PC-9 (cell line): ENCODE measurements at regions of chr1 and their contacts with region 1.

Region 1: GRCh38 chr1:225652729-225653462 is at the start of gene ENAH:
- DNase-seq: peak; percentile 48 to 90
- H3K4me3 ChIP-seq: peak within 1 kb of the TSS; percentile 92
- H3K27ac ChIP-seq: peak within 1 kb of the TSS; percentile 89
- H3K4me1 ChIP-seq: peaks cover 65% of the 10 kb centered on the region
- H3K27me3 ChIP-seq: no peaks in the 10 kb centered on the region
- CTCF ChIP-seq: no peak
- total RNA-seq, gene ENAH: 118 and 167 TPM in 2 replicates

Region 2: DNA sequence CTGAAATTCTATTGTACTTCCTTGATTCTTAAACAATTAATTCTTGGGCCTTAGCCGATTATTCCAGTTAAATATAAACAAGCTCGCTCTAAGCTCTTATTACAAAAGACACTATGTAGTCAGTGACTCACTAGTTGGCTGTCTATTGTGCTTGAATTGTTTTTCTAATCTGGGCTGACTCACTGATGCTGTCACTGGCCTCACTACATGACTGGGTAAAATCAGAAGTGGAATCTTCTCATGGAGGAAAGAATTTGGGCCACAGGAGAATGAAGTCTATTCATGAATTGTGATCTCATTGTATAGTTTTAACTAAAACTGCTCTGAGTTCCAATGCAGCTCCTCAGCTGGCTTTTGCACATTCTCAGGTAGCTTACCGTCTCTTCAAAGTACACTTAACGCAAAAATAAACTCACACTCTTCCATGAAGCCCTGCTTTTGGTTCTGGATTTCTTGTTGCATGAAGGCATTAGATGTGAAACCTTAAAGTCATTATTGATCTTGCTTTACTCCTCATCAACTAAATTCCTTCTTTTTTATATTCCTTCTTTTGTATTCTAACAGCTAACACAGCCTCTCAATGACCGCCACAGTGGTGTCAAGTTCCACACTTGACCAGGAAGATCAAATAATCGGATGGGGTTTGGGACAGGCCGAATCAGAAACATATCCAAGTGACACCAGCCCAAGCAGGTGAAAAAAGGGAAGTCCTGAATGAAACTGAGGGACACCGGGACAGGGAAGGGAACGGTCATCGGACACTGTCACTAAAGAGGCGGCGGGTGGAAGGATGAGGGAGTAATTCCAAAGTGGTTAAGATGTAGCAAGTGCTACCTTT is 144.1 kb before region 1 on chr1:
- CTCF ChIA-PET with region 1: no interaction called
- POLR2A ChIA-PET with region 1: interaction called, 4 read pairs
- intact Hi-C with region 1: loop called (anchors 2 kb)
- DNase-seq: peak; percentile 65 to 98
- H3K4me3 ChIP-seq: no peak overlapping the region
- H3K27ac ChIP-seq: peak overlapping the region; percentile 93
- H3K4me1 ChIP-seq: peaks cover 36% of the 10 kb centered on the region
- H3K27me3 ChIP-seq: no peaks in the 10 kb centered on the region
- CTCF ChIP-seq: no peak

Region 3: DNA sequence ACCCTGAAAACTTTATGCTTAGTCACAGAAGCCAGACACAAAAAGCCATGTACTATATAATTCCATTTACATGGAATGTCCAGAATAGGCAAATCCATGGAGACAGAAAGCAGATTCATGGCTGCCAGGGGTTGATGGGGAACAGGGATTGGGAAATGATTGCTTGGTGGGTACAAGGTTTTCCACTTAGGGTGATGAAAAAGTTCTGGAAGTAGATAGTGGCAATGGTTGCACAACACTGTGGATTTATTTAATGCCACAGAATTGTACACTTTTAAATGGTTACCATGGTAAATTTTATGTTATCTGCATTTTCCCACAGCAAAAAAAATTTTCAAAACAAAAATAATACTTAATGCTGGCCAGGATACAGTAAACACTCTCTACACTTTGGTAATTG is 40.6 kb before region 1 on chr1:
- CTCF ChIA-PET with region 1: no interaction called
- POLR2A ChIA-PET with region 1: interaction called, 12 read pairs
- intact Hi-C with region 1: loop called (anchors 5 kb)
- DNase-seq: peak in 1 of 2 experiments; percentile 10
- H3K4me3 ChIP-seq: no peak overlapping the region
- H3K27ac ChIP-seq: peak overlapping the region; percentile 43
- H3K4me1 ChIP-seq: peaks cover 15% of the 10 kb centered on the region
- H3K27me3 ChIP-seq: no peaks in the 10 kb centered on the region
- CTCF ChIP-seq: no peak

Region 4: GRCh38 chr1:225700164-225700740 is 47.4 kb after region 1 on chr1:
- CTCF ChIA-PET with region 1: interaction called, 3 read pairs
- POLR2A ChIA-PET with region 1: interaction called, 18 read pairs
- intact Hi-C with region 1: loop called (anchors 1 kb)
- DNase-seq: peak; percentile 75 to 99
- H3K4me3 ChIP-seq: peak overlapping the region; percentile 30; the same call in 1 of the 2 replicates
- H3K27ac ChIP-seq: peak overlapping the region; percentile 71
- H3K4me1 ChIP-seq: peaks cover 23% of the 10 kb centered on the region
- H3K27me3 ChIP-seq: no peaks in the 10 kb centered on the region
- CTCF ChIP-seq: no peak

Region 5: DNA sequence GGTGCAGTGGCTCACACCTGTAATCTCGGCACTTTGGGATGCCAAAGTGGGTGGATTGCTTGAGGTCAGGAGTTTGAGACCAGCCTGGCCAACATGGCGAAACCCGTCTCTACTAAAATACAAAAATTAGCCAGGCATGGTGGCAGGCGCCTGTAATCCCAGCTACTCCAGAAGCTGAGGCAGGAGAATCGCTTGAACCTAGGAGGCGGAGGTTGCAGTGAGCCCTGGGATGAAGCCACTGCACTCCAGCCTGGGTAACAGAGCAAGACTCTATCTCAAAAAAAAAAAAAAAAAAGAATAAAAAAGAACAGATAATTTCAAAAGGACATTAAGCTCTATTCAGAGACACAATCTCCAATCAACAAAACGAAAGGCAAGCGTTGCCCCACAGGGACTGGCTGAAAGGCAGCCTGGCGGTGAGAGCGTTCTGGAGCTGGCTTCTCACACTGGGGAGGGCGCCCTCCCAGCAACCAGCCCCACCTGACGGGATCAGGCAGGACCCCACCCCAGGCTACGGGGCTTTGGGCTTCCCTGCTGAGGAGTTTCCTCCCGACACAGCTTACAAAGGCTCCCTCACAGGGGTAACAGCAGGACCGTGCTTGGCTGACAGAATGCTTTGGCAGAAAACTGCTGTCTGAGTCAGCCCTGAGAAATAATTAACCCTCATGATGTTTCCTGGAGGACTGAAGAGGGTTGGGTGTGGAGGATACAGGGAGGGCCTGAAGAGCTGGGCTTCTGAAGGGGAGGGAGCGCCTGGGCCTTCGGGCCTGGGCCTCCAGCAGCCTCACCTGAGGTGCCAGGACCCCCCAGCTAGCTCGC is 93.7 kb after region 1 on chr1:
- CTCF ChIA-PET with region 1: no interaction called
- POLR2A ChIA-PET with region 1: interaction called, 10 read pairs
- intact Hi-C with region 1: no loop called
- DNase-seq: peak; percentile 59 to 74
- H3K4me3 ChIP-seq: peak overlapping the region; percentile 55; the same call in 1 of the 2 replicates
- H3K27ac ChIP-seq: peak overlapping the region; percentile 60
- H3K4me1 ChIP-seq: peaks cover 13% of the 10 kb centered on the region
- H3K27me3 ChIP-seq: no peaks in the 10 kb centered on the region
- CTCF ChIP-seq: no peak

Region 6: GRCh38 chr1:225881969-225882693 is 229.2 kb after region 1 on chr1 and contains the start of gene TMEM63A:
- CTCF ChIA-PET with region 1: no interaction called
- POLR2A ChIA-PET with region 1: no interaction called
- intact Hi-C with region 1: loop called (anchors 5 kb)
- DNase-seq: peak; percentile 75 to 95
- H3K4me3 ChIP-seq: peak within 1 kb of the TSS; percentile 92
- H3K27ac ChIP-seq: peak within 1 kb of the TSS; percentile 75
- H3K4me1 ChIP-seq: peaks cover 57% of the 10 kb centered on the region
- H3K27me3 ChIP-seq: no peaks in the 10 kb centered on the region
- CTCF ChIP-seq: no peak; the same call in 1 of the 2 replicates
- total RNA-seq, gene TMEM63A: 115 and 126 TPM in 2 replicates